OCI-LY7 (cell line): ENCODE measurements at regions of chr3 and their contacts with region 1.

Region 1: DNA sequence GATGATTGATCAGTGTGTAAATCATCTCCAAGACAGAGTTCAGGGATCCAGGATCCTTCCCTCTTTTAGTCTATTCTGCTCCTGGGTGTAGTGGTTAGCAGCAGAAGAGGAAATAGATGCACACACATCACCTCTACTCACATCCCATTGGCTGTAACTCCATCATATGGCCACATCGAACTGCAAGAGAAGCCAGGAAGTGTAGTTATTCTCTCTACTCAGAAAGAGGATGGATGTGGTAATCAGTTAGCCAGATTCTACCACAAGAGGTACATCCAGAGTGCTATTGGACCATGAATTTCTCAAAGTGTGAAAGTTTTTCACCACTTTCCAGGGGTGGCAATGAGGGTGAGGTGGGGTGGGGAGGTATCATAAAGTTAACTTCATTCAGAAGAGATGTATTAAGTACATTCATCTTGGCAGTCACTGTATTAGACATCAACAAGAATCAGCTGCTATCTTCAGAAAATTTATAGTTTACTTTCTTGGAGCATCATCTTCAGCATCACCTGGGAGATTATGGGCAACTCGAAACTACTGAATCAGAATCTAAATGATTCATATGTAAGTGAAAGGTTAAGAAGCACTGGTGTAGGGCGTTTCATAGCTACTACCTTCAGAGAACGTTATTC is 60.6 kb upstream of the GAP43 start:
- DNase-seq: no peak
- H3K4me3 ChIP-seq: no peak overlapping the region
- H3K27ac ChIP-seq: no peak overlapping the region
- H3K4me1 ChIP-seq: no peaks in the 10 kb centered on the region
- CTCF ChIP-seq: no peak

Region 2: DNA sequence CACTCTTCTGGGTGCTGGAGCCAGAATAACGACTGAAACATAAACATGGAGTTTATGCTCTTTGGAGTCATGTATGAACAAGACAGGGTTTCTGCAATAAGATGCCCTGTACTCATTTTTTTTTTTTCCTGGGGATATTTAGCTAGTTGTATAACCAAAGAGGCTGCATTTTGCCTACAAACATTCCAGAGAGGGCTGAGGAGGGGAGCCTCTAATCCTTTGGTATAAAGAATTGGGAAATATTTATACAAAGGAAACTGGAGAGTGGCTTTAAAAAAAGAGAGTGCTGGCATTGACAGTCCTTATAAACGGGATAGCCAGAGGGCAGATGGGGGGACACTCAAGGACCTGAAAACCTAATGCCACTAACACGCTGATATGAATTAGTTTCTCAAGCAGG is 28.1 kb after region 1 on chr3:
- CTCF ChIA-PET with region 1: no interaction called
- POLR2A ChIA-PET with region 1: interaction called, 4 read pairs
- intact Hi-C with region 1: loop called (anchors 1 kb)
- DNase-seq: no peak
- H3K4me3 ChIP-seq: no peak overlapping the region
- H3K27ac ChIP-seq: no peak overlapping the region
- H3K4me1 ChIP-seq: no peaks in the 10 kb centered on the region
- CTCF ChIP-seq: no peak